GM10248 (cell line): ENCODE measurements at regions of chr11 and their contacts with region 1.

Region 1: DNA sequence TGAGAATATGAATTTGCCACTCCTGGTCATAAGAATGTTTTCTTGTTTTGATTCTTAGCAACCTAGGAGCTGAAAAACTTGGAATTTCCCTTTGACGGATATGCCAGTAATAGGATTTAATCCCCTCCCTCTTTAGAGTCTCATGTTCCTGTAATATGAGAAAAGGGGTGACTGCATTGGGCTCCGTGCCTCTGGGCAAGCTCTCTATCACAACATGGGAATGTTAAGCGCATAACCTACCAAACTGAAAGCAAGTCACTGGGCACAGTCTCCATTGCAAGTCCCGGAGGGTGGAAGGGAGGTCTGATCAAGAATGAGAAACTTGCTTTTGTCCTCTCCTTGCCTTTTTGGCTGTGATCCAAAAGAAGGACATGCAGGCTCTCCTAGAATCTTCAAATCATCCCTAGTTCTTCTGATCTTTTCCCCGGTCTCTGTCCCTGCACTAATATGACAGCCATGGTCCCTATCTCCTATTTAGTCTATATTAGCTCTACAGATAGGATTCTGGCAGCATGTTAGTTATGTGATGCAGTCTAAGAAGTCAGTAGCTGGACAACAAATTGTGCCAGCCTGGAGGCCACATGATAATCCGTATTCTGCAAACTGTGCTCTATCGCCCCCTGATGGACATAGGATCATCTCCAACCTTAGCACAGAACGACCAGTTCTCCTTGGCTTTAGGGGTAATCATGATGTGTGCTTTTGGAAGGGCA is 11.7 kb downstream of the OR10D3 start:
- DNase-seq: peak; percentile 38
- CTCF ChIP-seq: peak; percentile 65

Region 2: DNA sequence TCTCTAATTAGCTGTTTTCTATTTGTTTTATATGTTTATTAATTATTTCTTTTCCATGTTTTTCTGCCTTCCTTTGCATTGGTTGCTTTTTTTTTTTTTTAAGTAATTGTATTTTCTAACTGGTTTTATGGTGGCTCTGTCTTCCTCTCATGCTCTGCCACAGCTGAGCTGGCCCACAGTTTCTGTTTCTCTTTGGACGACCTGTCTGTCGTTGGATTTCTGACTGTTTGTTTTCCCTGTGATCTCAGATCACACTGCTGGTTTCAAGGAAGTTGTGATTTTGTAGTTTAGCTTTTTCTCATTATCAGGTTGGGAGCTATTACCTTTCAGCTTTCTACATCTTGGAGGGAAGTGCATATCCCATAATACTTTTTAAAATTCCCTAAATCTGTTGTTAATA is 372.8 kb before region 1 on chr11:
- CTCF ChIA-PET with region 1: no interaction called
- POLR2A ChIA-PET with region 1: no interaction called
- DNase-seq: no peak
- CTCF ChIP-seq: no peak

Region 3: GRCh38 chr11:124070915-124071635 is 123.8 kb before region 1 on chr11:
- CTCF ChIA-PET with region 1: interaction called, 26 read pairs
- POLR2A ChIA-PET with region 1: no interaction called
- DNase-seq: peak; percentile 67
- CTCF ChIP-seq: peak; percentile 70

Region 4: GRCh38 chr11:124207102-124207792 is 12.4 kb after region 1 on chr11:
- CTCF ChIA-PET with region 1: interaction called, 17 read pairs
- POLR2A ChIA-PET with region 1: no interaction called
- DNase-seq: no peak
- CTCF ChIP-seq: no peak